PC-9 (cell line): ENCODE measurements at regions of chr7 and their contacts with region 1.

Region 1: DNA sequence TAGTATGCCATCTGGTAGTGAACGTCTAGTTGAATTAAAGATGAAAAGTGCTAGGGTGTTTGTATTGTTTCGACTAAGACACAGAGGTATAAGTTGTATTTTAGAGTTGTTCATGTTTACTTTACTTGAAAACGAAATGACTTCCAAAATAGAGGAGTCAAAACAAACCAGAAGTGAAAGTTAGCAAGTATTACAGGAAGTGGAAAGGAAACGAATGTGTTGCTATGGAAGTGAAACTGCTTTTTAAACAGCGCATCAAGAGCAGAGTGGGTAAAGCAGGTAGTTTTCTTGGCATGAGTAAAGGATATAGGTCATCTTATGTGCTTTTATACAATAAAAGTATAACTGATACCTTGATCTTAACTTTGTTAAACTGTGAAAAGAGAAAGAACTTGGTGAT is 20.0 kb upstream of the GALNTL5 start:
- DNase-seq: no peak
- H3K4me3 ChIP-seq: no peak overlapping the region
- H3K27ac ChIP-seq: no peak overlapping the region
- H3K4me1 ChIP-seq: peaks cover 29% of the 10 kb centered on the region
- H3K27me3 ChIP-seq: peaks cover 5% of the 10 kb centered on the region; the same call in 1 of the 2 replicates
- CTCF ChIP-seq: no peak

Region 2: GRCh38 chr7:151570366-151570915 is 365.8 kb before region 1 on chr7:
- CTCF ChIA-PET with region 1: no interaction called
- POLR2A ChIA-PET with region 1: no interaction called
- intact Hi-C with region 1: loop called (anchors 2 kb)
- DNase-seq: no peak
- H3K4me3 ChIP-seq: no peak overlapping the region
- H3K27ac ChIP-seq: no peak overlapping the region
- H3K4me1 ChIP-seq: no peaks in the 10 kb centered on the region
- H3K27me3 ChIP-seq: no peaks in the 10 kb centered on the region
- CTCF ChIP-seq: peak; percentile 86

Region 3: GRCh38 chr7:151782598-151783448 is 153.4 kb before region 1 on chr7:
- CTCF ChIA-PET with region 1: interaction called, 14 read pairs
- POLR2A ChIA-PET with region 1: no interaction called
- intact Hi-C with region 1: loop called (anchors 1 kb)
- DNase-seq: peak; percentile 65 to 81
- H3K4me3 ChIP-seq: peak overlapping the region; percentile 49
- H3K27ac ChIP-seq: no peak overlapping the region
- H3K4me1 ChIP-seq: peaks cover 5% of the 10 kb centered on the region; the same call in 1 of the 2 replicates
- H3K27me3 ChIP-seq: peaks cover 11% of the 10 kb centered on the region; the same call in 1 of the 2 replicates
- CTCF ChIP-seq: peak; percentile 95

Region 4: DNA sequence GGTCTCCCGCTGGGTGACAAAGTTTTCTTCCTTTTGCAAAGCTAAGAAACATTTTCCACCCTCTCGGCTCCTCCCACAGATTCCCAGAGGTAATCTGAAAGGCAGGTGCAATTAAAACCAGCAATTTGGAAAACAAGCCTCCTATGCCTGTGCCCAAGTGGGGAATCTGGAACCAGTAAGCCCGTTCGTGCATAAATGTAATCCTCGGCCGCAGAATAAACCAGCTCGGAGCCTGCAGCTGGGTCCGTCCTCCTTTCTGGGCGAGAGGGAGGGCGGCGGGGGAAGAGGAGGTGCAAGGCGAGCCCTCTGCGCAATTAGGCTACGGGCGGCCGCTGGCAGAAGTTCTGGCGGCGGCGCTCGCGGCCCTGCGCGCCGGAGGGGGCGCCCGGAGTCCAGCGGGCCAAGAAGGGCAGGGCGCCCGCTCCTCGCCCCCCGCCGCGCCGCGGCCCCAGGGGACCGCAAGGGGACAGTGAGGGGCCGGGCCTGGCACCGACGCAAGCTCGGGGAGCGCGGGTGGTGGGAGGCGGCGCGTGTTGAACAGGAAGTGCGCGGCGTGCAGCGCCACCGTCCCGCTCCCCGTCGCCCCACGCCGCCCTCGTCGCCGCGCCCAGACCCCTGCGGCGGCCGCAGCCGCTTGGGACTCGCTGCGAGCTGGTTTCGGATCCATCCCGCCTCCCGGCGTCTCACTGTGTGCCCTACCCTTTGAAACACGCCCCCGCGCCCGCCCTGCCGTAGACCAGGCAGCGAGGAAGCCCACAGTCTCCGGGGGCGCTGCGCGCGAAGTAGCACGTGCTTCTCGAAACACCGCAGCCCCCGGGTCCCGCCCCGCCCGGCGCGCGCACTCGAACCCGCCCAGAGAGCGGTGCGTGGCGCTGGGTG is 59.1 kb before region 1 on chr7 and contains the start of gene PRKAG2:
- CTCF ChIA-PET with region 1: interaction called, 4 read pairs
- POLR2A ChIA-PET with region 1: no interaction called
- intact Hi-C with region 1: loop called (anchors 5 kb)
- DNase-seq: peak in 1 of 2 experiments; percentile 52
- H3K4me3 ChIP-seq: peak within 1 kb of the TSS; percentile 65
- H3K27ac ChIP-seq: no peak within 1 kb of the TSS
- H3K4me1 ChIP-seq: peaks cover 6% of the 10 kb centered on the region; the same call in 1 of the 2 replicates
- H3K27me3 ChIP-seq: peaks cover 6% of the 10 kb centered on the region; the same call in 1 of the 2 replicates
- CTCF ChIP-seq: no peak; the same call in 1 of the 2 replicates
- total RNA-seq, gene PRKAG2: 32.6 and 37.3 TPM in 2 replicates

Region 5: GRCh38 chr7:151897161-151897731 is 39.0 kb before region 1 on chr7:
- CTCF ChIA-PET with region 1: no interaction called
- POLR2A ChIA-PET with region 1: no interaction called
- intact Hi-C with region 1: no loop called
- DNase-seq: peak in 1 of 2 experiments; percentile 15
- H3K4me3 ChIP-seq: no peak overlapping the region
- H3K27ac ChIP-seq: no peak overlapping the region
- H3K4me1 ChIP-seq: no peaks in the 10 kb centered on the region
- H3K27me3 ChIP-seq: peaks cover 94% of the 10 kb centered on the region
- CTCF ChIP-seq: no peak